Mammary epithelial cell (primary cell): ENCODE measurements at regions of chr20 and their contacts with region 1.

Region 1: DNA sequence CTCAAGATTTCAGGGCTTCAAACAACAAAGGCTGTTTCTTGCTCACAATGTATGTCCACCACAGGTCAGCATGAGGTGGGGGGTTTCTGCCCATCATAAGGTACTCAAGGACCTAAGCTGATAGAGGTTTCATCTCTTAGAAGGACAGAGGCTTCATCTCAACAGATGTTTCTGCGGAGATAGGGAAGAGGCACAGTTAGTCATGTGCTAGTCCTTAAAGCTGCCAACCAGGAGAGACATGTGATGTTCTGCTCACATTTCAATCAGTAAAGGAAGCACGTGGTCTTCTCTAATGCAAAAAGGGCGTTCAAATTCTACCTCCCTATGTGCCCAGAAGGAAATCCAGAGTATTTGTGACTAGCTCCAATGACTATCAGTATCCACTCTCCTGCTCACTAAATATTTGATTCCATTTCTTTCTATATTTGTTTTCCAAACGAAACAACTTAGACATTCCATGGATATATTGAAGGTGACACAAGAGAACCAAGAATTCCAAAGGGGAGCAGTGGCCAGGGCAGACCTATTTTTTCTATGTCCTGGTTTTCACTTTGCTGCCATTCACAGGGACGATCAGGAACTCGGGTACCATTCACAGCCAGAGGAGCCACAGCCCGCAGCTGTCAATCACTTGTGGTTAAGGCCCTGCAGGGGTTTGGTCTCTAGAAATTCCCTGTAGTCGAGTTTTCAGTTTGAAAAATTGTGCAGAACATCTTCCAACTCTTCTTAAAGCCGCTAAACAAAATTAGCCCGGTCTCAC is 173.2 kb upstream of the FOXA2 start:
- DNase-seq: no peak
- H3K4me3 ChIP-seq: no peak overlapping the region
- H3K27ac ChIP-seq: no peak overlapping the region
- H3K4me1 ChIP-seq: peaks cover 21% of the 10 kb centered on the region
- H3K27me3 ChIP-seq: no peaks in the 10 kb centered on the region
- CTCF ChIP-seq: no peak

Region 2: GRCh38 chr20:22723648-22724047 is 34.0 kb before region 1 on chr20:
- CTCF ChIA-PET with region 1: interaction called, 3 read pairs
- dilution Hi-C with region 1: loop called (anchors 5 kb)
- in situ Hi-C with region 1: no loop called
- intact Hi-C with region 1: loop called (anchors 2 kb)
- DNase-seq: no peak
- H3K4me3 ChIP-seq: no peak overlapping the region
- H3K27ac ChIP-seq: no peak overlapping the region
- H3K4me1 ChIP-seq: peaks cover 7% of the 10 kb centered on the region
- H3K27me3 ChIP-seq: no peaks in the 10 kb centered on the region
- CTCF ChIP-seq: peak in 1 of 2 donors; percentile 1

Region 3: GRCh38 chr20:22825076-22825475 is 67.5 kb after region 1 on chr20:
- CTCF ChIA-PET with region 1: no interaction called
- dilution Hi-C with region 1: no loop called
- in situ Hi-C with region 1: no loop called
- intact Hi-C with region 1: no loop called
- DNase-seq: peak; percentile 49
- H3K4me3 ChIP-seq: no peak overlapping the region
- H3K27ac ChIP-seq: peak overlapping the region; percentile 38
- H3K4me1 ChIP-seq: peaks cover 56% of the 10 kb centered on the region
- H3K27me3 ChIP-seq: no peaks in the 10 kb centered on the region
- CTCF ChIP-seq: no peak